B cell (primary cell): ENCODE measurements at regions of chr1 and their contacts with region 1.

Region 1: GRCh38 chr1:33181921-33182341 is at the start of gene TRIM62:
- DNase-seq: peak; percentile 88
- ATAC-seq: peak; percentile 72
- H3K4me3 ChIP-seq: peak within 1 kb of the TSS; percentile 31 to 86 (median 75)
- H3K4me3 Mint-ChIP-seq: peak within 1 kb of the TSS; percentile 97
- H3K27ac ChIP-seq: peak within 1 kb of the TSS in 1 of 2 donors; percentile 31
- H3K27ac Mint-ChIP-seq: peak within 1 kb of the TSS; percentile 85
- H3K4me1 ChIP-seq: peaks cover 12 to 17% of the 10 kb centered on the region in 2 donors
- H3K4me1 Mint-ChIP-seq: peaks cover 17% of the 10 kb centered on the region
- H3K27me3 ChIP-seq: peaks cover 0 to 14% (median 8%) of the 10 kb centered on the region in 4 experiments
- H3K27me3 Mint-ChIP-seq: peaks cover 28% of the 10 kb centered on the region
- CTCF ChIP-seq: no peak
- total RNA-seq, gene TRIM62: 15.7 and 24.1 TPM in 2 replicates

Region 2: GRCh38 chr1:32650752-32651460 is 531.0 kb before region 1 on chr1 and contains the start of gene RBBP4:
- CTCF ChIA-PET with region 1: no interaction called
- POLR2A ChIA-PET with region 1: no interaction called
- intact Hi-C with region 1: loop called (anchors 5 kb)
- DNase-seq: peak; percentile 99
- ATAC-seq: peak; percentile 83
- H3K4me3 ChIP-seq: peak within 1 kb of the TSS; percentile 77 to 96 (median 81)
- H3K4me3 Mint-ChIP-seq: peak within 1 kb of the TSS; percentile 98
- H3K27ac ChIP-seq: peak within 1 kb of the TSS; percentile 97 to 100
- H3K27ac Mint-ChIP-seq: peak within 1 kb of the TSS; percentile 100
- H3K4me1 ChIP-seq: peaks cover 21 to 31% of the 10 kb centered on the region in 2 donors
- H3K4me1 Mint-ChIP-seq: peaks cover 55% of the 10 kb centered on the region
- H3K27me3 ChIP-seq: no peaks in the 10 kb centered on the region
- H3K27me3 Mint-ChIP-seq: no peaks in the 10 kb centered on the region
- CTCF ChIP-seq: no peak
- total RNA-seq, gene RBBP4: 192 and 204 TPM in 2 replicates

Region 3: GRCh38 chr1:33036526-33037503 is 145.1 kb before region 1 on chr1 and contains the start of gene AK2:
- CTCF ChIA-PET with region 1: no interaction called
- POLR2A ChIA-PET with region 1: no interaction called
- intact Hi-C with region 1: loop called (anchors 5 kb)
- DNase-seq: peak; percentile 94
- ATAC-seq: peak; percentile 99
- H3K4me3 ChIP-seq: peak within 1 kb of the TSS; percentile 72 to 99 (median 77)
- H3K4me3 Mint-ChIP-seq: peak within 1 kb of the TSS; percentile 97
- H3K27ac ChIP-seq: peak within 1 kb of the TSS; percentile 42 to 78
- H3K27ac Mint-ChIP-seq: peak within 1 kb of the TSS; percentile 91
- H3K4me1 ChIP-seq: peaks cover 16 to 24% of the 10 kb centered on the region in 2 donors
- H3K4me1 Mint-ChIP-seq: peaks cover 45% of the 10 kb centered on the region
- H3K27me3 ChIP-seq: no peaks in the 10 kb centered on the region
- H3K27me3 Mint-ChIP-seq: no peaks in the 10 kb centered on the region
- CTCF ChIP-seq: no peak
- total RNA-seq, gene AK2: 104 and 109 TPM in 2 replicates

Region 4: DNA sequence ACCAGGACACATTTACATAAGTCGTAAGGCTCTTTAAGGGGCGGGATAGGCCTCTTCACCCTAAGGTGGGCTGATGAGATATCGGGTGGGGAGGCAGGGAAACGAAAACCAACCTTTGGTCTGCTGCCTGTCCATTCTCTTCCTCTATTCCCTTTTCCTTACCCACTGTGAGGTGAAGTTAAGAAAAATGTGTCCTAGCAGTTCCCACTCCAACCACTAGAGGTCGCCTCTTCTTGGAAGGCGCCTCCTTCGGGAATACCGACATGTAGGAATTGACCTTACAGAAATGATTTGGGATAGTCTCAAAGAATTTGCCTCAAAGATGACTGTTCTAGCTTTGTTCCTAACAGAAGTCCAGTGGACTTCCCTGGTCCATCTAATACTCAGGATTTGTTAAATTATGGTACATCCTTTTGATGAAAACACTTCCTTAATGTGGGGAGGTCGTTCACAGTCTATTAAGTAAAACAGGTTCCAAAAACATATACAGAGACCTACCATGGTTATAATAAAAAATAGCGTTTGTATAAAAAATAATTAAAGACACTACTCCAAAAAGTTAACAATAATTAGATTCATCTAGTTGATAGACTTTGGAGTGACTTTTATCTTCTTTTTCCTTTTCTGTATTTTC is 86.8 kb before region 1 on chr1:
- CTCF ChIA-PET with region 1: no interaction called
- POLR2A ChIA-PET with region 1: no interaction called
- intact Hi-C with region 1: no loop called
- DNase-seq: peak; percentile 58
- ATAC-seq: no peak
- H3K4me3 ChIP-seq: no peak overlapping the region
- H3K4me3 Mint-ChIP-seq: no peak overlapping the region
- H3K27ac ChIP-seq: no peak overlapping the region
- H3K27ac Mint-ChIP-seq: no peak overlapping the region
- H3K4me1 ChIP-seq: peaks cover 4 to 10% of the 10 kb centered on the region in 2 donors
- H3K4me1 Mint-ChIP-seq: peaks cover 4% of the 10 kb centered on the region
- H3K27me3 ChIP-seq: no peaks in the 10 kb centered on the region
- H3K27me3 Mint-ChIP-seq: no peaks in the 10 kb centered on the region
- CTCF ChIP-seq: peak; percentile 90

Region 5: GRCh38 chr1:33127001-33127791 is 54.7 kb before region 1 on chr1:
- CTCF ChIA-PET with region 1: interaction called, 32 read pairs
- POLR2A ChIA-PET with region 1: interaction called, 16 read pairs
- intact Hi-C with region 1: loop called (anchors 1 kb)
- DNase-seq: peak; percentile 99
- ATAC-seq: peak; percentile 97
- H3K4me3 ChIP-seq: peak overlapping the region; percentile 80 to 96 (median 88)
- H3K4me3 Mint-ChIP-seq: peak overlapping the region; percentile 93
- H3K27ac ChIP-seq: peak overlapping the region; percentile 82 to 83
- H3K27ac Mint-ChIP-seq: peak overlapping the region; percentile 95
- H3K4me1 ChIP-seq: peaks cover 13 to 25% of the 10 kb centered on the region in 2 donors
- H3K4me1 Mint-ChIP-seq: peaks cover 18% of the 10 kb centered on the region
- H3K27me3 ChIP-seq: no peaks in the 10 kb centered on the region
- H3K27me3 Mint-ChIP-seq: peaks cover 5% of the 10 kb centered on the region
- CTCF ChIP-seq: peak; percentile 86

Region 6: DNA sequence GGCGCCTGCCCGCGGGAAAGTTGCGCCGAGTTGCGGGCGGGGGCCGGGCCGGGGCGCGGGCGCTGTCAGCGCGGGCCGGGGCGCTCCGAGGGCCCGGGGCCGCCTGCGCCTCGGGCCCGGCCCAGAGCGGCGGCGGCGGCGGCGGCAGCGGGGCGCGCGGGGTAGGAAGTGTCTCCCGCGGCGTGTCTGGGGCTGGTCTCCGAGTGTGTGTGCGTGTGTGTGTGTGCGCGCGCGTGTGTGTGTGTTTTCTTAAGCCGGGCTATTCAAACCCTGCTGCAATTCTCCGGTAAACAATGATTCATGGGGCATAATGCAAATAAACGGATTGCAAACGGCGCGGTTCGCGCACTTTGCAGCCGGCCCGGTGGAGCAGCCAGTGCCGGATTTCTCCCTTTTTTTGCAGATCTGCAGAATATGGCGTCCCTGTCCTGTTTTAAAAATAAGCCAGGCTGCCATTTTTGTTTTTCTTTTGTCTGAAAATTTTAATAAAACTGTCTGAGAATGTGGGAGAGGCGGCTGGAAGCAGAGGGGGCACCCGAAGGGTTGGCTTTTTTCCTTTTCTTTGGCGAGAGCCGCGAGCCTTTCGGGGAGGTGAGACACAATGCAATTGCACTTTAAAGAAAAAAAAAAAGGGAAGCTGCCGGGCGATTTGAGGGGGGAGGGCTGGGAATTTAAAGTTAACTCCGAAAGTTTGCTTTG is 74.9 kb after region 1 on chr1:
- CTCF ChIA-PET with region 1: no interaction called
- POLR2A ChIA-PET with region 1: interaction called, 3 read pairs
- intact Hi-C with region 1: loop called (anchors 5 kb)
- DNase-seq: peak; percentile 72
- ATAC-seq: peak; percentile 62
- H3K4me3 ChIP-seq: peak overlapping the region; percentile 34 to 91 (median 79)
- H3K4me3 Mint-ChIP-seq: peak overlapping the region; percentile 98
- H3K27ac ChIP-seq: peak overlapping the region; percentile 19 to 42
- H3K27ac Mint-ChIP-seq: peak overlapping the region; percentile 97
- H3K4me1 ChIP-seq: peaks cover 20 to 25% of the 10 kb centered on the region in 2 donors
- H3K4me1 Mint-ChIP-seq: peaks cover 39% of the 10 kb centered on the region
- H3K27me3 ChIP-seq: no peaks in the 10 kb centered on the region
- H3K27me3 Mint-ChIP-seq: no peaks in the 10 kb centered on the region
- CTCF ChIP-seq: no peak